Stomach (tissue), 19 donors: ENCODE measurements at regions of chr1 and their contacts with region 1.

Region 1: GRCh38 chr1:94863919-94864318 is 43.8 kb downstream of the SLC44A3 start:
- DNase-seq: peak; percentile 37 to 85
- H3K4me3 ChIP-seq: no peak overlapping the region
- H3K27ac ChIP-seq: peak overlapping the region; percentile 82 to 90 (median 84)
- H3K4me1 ChIP-seq: peaks cover 24 to 58% (median 51%) of the 10 kb centered on the region in 4 donors
- H3K27me3 ChIP-seq: no peaks in the 10 kb centered on the region
- CTCF ChIP-seq: no peak
- EP300 ChIP-seq: peak; percentile 82
- POLR2A ChIP-seq: no peak

Region 2: GRCh38 chr1:94919241-94920030 is 55.5 kb after region 1 on chr1:
- intact Hi-C with region 1: loop called (anchors 10 kb)
- DNase-seq: no peak
- H3K4me3 ChIP-seq: no peak overlapping the region
- H3K27ac ChIP-seq: peak overlapping the region in 3 of 5 donors; percentile 10 to 28 (median 20)
- H3K4me1 ChIP-seq: peaks cover 22 to 93% (median 62%) of the 10 kb centered on the region in 4 donors
- H3K27me3 ChIP-seq: no peaks in the 10 kb centered on the region
- CTCF ChIP-seq: no peak
- EP300 ChIP-seq: no peak
- POLR2A ChIP-seq: no peak